ENCODE measurements at regions of chr9 and their contacts with region 1.

Region 1: DNA sequence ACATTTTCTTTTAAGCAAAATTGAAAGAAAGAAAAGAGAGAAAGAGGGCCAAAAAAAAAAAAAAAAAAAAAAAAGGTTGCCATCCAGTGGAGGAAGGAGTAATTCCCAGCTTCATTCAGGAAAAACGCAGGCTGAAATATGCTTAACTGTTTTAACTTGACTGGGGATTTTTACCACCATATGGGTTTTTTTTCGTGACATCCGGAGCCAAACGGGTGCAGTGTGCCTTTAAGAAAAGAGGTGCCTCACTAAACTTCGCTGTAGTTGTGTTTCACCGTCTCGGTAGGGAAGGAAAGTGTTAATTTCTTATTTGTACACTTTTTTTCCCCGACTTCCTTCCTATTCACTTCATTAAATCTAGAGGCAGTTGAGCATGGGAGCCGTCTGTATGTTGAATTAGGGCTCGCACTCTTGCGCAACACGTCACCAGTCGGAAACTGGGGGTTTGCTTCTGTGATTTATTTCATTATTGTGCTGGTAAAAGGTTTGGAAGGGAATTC is 143.0 kb downstream of the SMARCA2 start:
- DNase-seq: peak; percentile 54
- ATAC-seq: peak; percentile 70
- H3K4me3 Mint-ChIP-seq: peak overlapping the region; percentile 81
- H3K27ac Mint-ChIP-seq: peak overlapping the region; percentile 99
- H3K4me1 Mint-ChIP-seq: peaks cover 58% of the 10 kb centered on the region
- H3K27me3 Mint-ChIP-seq: no peaks in the 10 kb centered on the region

Region 2: GRCh38 chr9:2014696-2015580 is 143.2 kb before region 1 on chr9 and contains the start of gene SMARCA2:
- CTCF ChIA-PET with region 1: no interaction called
- POLR2A ChIA-PET with region 1: no interaction called
- intact Hi-C with region 1: loop called (anchors 1 to 2 kb)
- DNase-seq: peak; percentile 98
- ATAC-seq: peak; percentile 84
- H3K4me3 Mint-ChIP-seq: peak within 1 kb of the TSS; percentile 92
- H3K27ac Mint-ChIP-seq: peak within 1 kb of the TSS; percentile 99
- H3K4me1 Mint-ChIP-seq: peaks cover 45% of the 10 kb centered on the region
- H3K27me3 Mint-ChIP-seq: no peaks in the 10 kb centered on the region
- total RNA-seq, gene SMARCA2: 91.3 to 94.0 TPM

Measured in activated CD4-positive, alpha-beta T cell treated with anti-CD3 and anti-CD28 coated beads for 36 hours (primary cell).